ENCODE measurements at regions of chr17 and their contacts with region 1.

Region 1: GRCh38 chr17:75784473-75785015 is at the start of gene UNK:
- DNase-seq: peak; percentile 98 to 100
- H3K4me3 ChIP-seq: peak within 1 kb of the TSS; percentile 55
- H3K4me3 Mint-ChIP-seq: peak within 1 kb of the TSS; percentile 84
- H3K27ac Mint-ChIP-seq: peak within 1 kb of the TSS; percentile 97
- H3K4me1 ChIP-seq: peaks cover 37% of the 10 kb centered on the region
- H3K4me1 Mint-ChIP-seq: peaks cover 22% of the 10 kb centered on the region
- H3K27me3 ChIP-seq: no peaks in the 10 kb centered on the region
- H3K27me3 Mint-ChIP-seq: peaks cover 3% of the 10 kb centered on the region
- CTCF ChIP-seq: no peak
- total RNA-seq, gene UNK: 31.2 and 33.3 TPM in 2 replicates

Region 2: GRCh38 chr17:75764711-75765421 is 19.7 kb before region 1 on chr17 and contains the start of gene GALK1:
- CTCF ChIA-PET with region 1: interaction called, 27 read pairs
- POLR2A ChIA-PET with region 1: interaction called, 49 read pairs
- intact Hi-C with region 1: no loop called
- DNase-seq: peak; percentile 73 to 81
- H3K4me3 ChIP-seq: peak within 1 kb of the TSS; percentile 75
- H3K4me3 Mint-ChIP-seq: peak within 1 kb of the TSS; percentile 75
- H3K27ac Mint-ChIP-seq: peak within 1 kb of the TSS; percentile 75
- H3K4me1 ChIP-seq: peaks cover 24% of the 10 kb centered on the region
- H3K4me1 Mint-ChIP-seq: peaks cover 5% of the 10 kb centered on the region
- H3K27me3 ChIP-seq: no peaks in the 10 kb centered on the region
- H3K27me3 Mint-ChIP-seq: no peaks in the 10 kb centered on the region
- CTCF ChIP-seq: peak; percentile 65 to 73
- total RNA-seq, gene GALK1: 41.1 and 45.0 TPM in 2 replicates

Region 3: DNA sequence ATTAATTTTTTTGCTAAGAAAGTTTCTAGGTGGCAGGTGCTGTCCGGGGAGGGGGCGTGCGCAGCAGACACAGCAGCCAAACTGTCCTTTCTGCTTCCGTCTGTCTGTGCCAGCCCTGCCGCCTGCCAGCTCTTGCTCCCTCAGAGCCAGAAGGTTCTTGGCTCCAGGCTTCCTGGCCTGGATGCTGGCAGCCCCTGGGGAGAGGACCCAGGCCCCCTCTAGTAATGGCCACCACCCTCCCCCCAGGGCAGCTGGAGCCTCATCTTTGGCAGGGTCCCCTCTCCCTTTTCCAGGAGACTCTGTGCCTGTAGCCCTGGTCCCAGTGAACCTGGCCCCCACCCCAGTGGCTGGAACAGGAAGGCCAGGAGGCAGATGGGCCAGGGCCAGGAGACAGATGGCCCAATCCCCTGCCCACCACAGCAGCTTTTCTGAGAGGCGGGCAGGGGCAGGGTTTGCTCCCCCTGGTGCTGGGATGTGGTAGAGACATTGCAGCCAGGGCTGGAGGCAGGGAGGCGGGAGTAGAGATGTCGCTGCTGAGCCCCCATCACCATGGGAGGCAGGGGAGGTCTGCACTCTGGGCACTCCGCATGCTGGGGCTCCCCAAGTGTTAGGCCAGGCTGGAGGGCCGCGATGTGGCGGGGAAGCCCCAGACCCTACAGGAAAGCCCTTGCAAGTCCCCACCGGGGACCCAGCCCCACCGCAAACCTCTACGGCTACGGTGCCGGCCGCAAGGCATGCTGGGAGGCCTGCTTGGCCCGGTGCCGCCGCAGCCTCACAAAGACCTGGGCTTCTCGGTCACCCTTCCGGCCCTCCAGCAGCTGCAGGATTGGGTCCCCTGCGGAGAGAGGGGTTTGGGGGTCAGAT is 42.9 kb after region 1 on chr17:
- CTCF ChIA-PET with region 1: interaction called, 4 read pairs
- POLR2A ChIA-PET with region 1: interaction called, 6 read pairs
- intact Hi-C with region 1: loop called (anchors 5 kb)
- DNase-seq: peak in 1 of 2 experiments; percentile 77
- H3K4me3 ChIP-seq: no peak overlapping the region
- H3K4me3 Mint-ChIP-seq: no peak overlapping the region
- H3K27ac Mint-ChIP-seq: no peak overlapping the region
- H3K4me1 ChIP-seq: peaks cover 4% of the 10 kb centered on the region; the same call in 1 of the 2 replicates
- H3K4me1 Mint-ChIP-seq: peaks cover 4% of the 10 kb centered on the region
- H3K27me3 ChIP-seq: no peaks in the 10 kb centered on the region
- H3K27me3 Mint-ChIP-seq: no peaks in the 10 kb centered on the region
- CTCF ChIP-seq: peak; percentile 66 to 70

Region 4: DNA sequence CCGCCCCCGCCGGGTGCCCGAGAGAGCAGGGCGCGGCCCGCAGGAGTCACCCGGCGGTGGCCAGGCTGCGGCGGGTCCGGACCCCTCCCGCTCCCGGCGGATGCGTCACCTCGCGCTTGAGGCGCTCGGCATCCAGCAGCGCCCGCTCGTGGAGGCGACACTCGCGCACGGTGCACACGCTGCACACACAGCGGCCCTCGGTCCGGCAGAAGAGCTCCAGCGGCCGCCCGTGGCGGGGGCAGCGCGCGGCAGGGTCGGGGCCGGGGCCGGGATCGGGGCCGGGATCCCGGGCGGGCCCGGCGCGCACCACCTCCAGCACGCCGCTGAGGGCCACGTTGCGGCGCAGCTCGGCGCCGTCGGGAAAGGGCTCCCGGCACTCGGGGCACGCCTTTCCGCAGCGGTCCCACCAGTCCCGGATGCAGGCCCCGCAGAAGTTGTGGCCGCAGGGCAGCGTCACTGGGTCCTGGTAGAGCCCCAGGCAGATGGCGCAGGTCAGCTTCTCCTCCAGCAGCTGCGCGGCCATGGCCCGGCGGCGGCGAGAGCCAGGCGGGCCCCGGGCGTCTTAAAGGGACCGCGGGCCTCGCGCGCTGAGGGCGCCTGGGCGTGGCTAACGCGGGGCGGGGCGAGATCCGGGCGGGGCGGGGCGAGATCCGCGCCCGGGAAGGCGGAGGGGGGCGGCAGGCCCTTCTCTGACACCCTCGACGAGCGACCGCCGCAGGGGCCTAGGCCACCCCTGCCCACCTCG is 112.0 kb after region 1 on chr17 and contains the start of gene TRIM65:
- CTCF ChIA-PET with region 1: interaction called, 5 read pairs
- POLR2A ChIA-PET with region 1: interaction called, 8 read pairs
- intact Hi-C with region 1: loop called (anchors 5 kb)
- DNase-seq: peak; percentile 80 to 87
- H3K4me3 ChIP-seq: peak within 1 kb of the TSS; percentile 88
- H3K4me3 Mint-ChIP-seq: peak within 1 kb of the TSS; percentile 72
- H3K27ac Mint-ChIP-seq: peak within 1 kb of the TSS; percentile 94
- H3K4me1 ChIP-seq: peaks cover 21% of the 10 kb centered on the region
- H3K4me1 Mint-ChIP-seq: peaks cover 19% of the 10 kb centered on the region
- H3K27me3 ChIP-seq: no peaks in the 10 kb centered on the region
- H3K27me3 Mint-ChIP-seq: no peaks in the 10 kb centered on the region
- CTCF ChIP-seq: peak in 1 of 2 experiments; percentile 36
- total RNA-seq, gene TRIM65: 23.1 and 25.2 TPM in 2 replicates

Region 5: DNA sequence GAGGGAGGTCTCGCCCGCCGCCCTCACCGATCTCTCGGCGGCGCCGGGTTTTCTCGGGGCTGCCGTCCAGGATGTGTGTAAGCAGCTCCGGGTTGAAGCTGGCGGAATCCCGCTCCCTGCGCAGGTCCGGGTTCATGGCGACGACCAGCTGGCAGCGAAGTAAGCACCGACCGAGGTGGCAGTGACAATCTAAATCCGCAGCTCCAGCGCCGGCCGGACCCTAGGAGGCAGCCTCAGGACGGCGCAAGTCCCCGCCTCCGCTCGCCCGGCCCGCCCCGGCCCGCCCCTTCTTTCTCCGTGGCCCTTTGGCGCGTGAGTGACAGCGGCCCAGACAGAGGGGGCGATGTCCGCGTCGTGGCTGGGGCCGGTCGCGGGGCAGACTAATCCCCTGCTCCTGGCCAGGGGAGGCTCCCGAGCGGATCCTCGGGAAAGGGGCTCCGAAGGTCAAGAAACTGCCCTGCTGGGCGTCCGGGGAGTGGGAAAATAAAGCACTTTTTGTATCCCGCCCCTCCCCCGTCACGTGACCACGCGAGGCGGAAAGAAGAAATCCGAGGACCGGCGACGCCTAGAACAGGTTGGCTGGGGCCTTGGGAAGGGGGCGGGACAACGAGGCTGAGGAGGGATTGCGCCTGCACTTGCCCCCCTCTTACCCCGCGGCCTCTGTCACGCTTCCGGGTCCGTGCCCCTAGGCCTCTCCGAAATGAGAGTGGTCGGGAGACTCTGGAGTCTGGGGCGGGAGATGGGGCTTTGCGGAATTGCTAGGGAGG is 194.6 kb after region 1 on chr17 and contains the starts of genes ACOX1 and TEN1:
- CTCF ChIA-PET with region 1: no interaction called
- POLR2A ChIA-PET with region 1: no interaction called
- intact Hi-C with region 1: loop called (anchors 10 kb)
- DNase-seq: peak; percentile 99
- H3K4me3 ChIP-seq: peak within 1 kb of the TSS; percentile 88
- H3K4me3 Mint-ChIP-seq: peak within 1 kb of the TSS; percentile 97
- H3K27ac Mint-ChIP-seq: peak within 1 kb of the TSS; percentile 100
- H3K4me1 ChIP-seq: peaks cover 59% of the 10 kb centered on the region
- H3K4me1 Mint-ChIP-seq: peaks cover 49% of the 10 kb centered on the region
- H3K27me3 ChIP-seq: no peaks in the 10 kb centered on the region
- H3K27me3 Mint-ChIP-seq: no peaks in the 10 kb centered on the region
- CTCF ChIP-seq: peak; percentile 24 to 30
- total RNA-seq, gene ACOX1: 43.7 and 48.3 TPM in 2 replicates
- total RNA-seq, gene TEN1: 19.1 and 20.3 TPM in 2 replicates